WTC11 (cell line): ENCODE measurements at regions of chr7 and their contacts with region 1.

Region 1: DNA sequence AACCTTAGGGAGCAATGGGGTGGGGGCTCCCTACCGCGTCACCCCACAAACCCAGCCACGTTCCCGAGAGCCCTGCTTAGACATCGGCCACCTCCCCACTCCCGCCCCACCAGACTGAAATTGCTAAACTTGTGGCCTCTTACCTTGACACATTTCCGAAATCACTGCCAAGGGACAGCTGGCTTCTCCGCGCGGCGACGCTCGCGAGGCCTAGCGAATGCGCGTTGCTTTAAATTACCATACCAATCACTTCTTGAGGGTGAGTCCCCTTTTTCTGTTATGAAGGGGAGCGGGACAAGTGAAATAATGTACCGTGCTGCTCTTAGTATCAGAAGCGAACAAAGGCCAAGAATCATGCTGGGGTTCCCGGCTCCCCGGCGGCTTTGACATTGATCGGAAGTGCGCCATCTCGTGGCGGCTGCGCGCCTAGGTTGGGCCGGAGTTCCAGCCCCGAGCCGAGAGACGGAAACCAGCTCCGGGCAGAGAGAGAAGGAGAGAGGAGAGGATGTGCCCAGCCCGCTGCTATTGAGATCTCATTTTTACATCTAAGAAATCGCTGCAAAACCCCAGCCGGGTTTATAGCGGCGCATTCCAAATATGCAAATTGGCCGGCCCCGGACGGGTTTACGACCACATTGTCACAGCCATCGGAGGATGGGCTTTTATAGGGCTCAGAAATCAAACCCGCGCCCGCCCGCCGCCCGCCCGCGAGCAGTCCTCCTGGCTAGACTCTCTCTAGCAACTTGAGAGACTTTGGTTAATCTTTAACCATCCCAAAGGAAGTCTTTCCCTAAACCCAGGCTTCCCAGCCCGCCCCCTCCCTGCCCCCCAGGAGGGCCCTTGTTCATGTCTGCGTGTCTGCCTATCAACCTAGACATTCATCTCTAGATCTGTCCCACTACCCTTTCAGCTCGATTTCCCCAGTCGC is 5.3 kb downstream of the HOXA11 start:
- DNase-seq: peak; percentile 80
- ATAC-seq: peak; percentile 63
- H3K4me3 Mint-ChIP-seq: peak overlapping the region; percentile 41
- H3K27ac Mint-ChIP-seq: no peak overlapping the region
- H3K4me1 Mint-ChIP-seq: peaks cover 28% of the 10 kb centered on the region
- H3K27me3 Mint-ChIP-seq: peaks cover 100% of the 10 kb centered on the region
- CTCF ChIP-seq: peak; percentile 83

Region 2: GRCh38 chr7:27080844-27081436 is 98.8 kb before region 1 on chr7:
- CTCF ChIA-PET with region 1: no interaction called
- POLR2A ChIA-PET with region 1: no interaction called
- DNase-seq: no peak
- ATAC-seq: peak; percentile 69
- H3K4me3 Mint-ChIP-seq: no peak overlapping the region
- H3K27ac Mint-ChIP-seq: no peak overlapping the region
- H3K4me1 Mint-ChIP-seq: peaks cover 3% of the 10 kb centered on the region; the same call in 1 of the 2 replicates
- H3K27me3 Mint-ChIP-seq: peaks cover 46% of the 10 kb centered on the region
- CTCF ChIP-seq: no peak

Region 3: DNA sequence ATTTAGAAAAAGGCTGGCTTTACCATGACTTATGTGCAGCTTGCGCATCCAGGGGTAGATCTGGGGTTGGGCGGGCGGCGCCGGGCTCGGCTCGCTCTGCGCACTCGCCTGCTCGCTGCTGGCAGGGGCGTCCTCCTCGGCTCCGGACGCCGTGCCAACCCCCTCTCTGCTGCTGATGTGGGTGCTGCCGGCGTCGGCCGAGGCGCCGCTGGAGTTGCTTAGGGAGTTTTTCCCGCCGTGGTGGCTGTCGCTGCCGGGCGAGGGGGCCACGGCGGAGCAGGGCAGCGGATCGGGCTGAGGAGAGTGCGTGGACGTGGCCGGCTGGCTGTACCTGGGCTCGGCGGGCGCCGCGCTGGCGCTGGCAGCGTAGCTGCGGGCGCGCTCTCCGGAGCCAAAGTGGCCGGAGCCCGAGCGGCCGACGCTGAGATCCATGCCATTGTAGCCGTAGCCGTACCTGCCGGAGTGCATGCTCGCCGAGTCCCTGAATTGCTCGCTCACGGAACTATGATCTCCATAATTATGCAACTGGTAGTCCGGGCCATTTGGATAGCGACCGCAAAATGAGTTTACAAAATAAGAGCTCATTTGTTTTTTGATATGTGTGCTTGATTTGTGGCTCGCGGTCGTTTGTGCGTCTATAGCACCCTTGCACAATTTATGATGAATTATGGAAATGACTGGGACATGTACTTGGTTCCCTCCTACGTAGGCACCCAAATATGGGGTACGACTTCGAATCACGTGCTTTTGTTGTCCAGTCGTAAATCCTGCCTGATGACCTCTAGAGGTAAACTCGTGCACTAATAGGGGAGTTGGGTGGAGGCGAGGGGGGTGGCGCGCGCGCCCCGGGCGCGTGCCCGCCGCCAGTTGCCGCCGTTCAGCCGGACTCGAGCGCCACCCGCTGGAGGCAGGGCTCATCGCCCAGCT is 36.5 kb before region 1 on chr7 and contains the start of gene HOXA5:
- CTCF ChIA-PET with region 1: interaction called, 11 read pairs
- POLR2A ChIA-PET with region 1: no interaction called
- DNase-seq: peak; percentile 89
- ATAC-seq: peak; percentile 31
- H3K4me3 Mint-ChIP-seq: peak within 1 kb of the TSS; percentile 74
- H3K27ac Mint-ChIP-seq: no peak within 1 kb of the TSS
- H3K4me1 Mint-ChIP-seq: peaks cover 25% of the 10 kb centered on the region
- H3K27me3 Mint-ChIP-seq: peaks cover 100% of the 10 kb centered on the region
- CTCF ChIP-seq: peak; percentile 88
- total RNA-seq, gene HOXA5: 0.14 TPM in 1 of 3 replicates, not detected in the others

Region 4: GRCh38 chr7:27168265-27168947 is 11.4 kb before region 1 on chr7:
- CTCF ChIA-PET with region 1: interaction called, 22 read pairs
- POLR2A ChIA-PET with region 1: no interaction called
- DNase-seq: peak; percentile 35
- ATAC-seq: no peak
- H3K4me3 Mint-ChIP-seq: peak overlapping the region; percentile 13
- H3K27ac Mint-ChIP-seq: no peak overlapping the region
- H3K4me1 Mint-ChIP-seq: peaks cover 26% of the 10 kb centered on the region
- H3K27me3 Mint-ChIP-seq: peaks cover 99% of the 10 kb centered on the region
- CTCF ChIP-seq: no peak

Region 5: DNA sequence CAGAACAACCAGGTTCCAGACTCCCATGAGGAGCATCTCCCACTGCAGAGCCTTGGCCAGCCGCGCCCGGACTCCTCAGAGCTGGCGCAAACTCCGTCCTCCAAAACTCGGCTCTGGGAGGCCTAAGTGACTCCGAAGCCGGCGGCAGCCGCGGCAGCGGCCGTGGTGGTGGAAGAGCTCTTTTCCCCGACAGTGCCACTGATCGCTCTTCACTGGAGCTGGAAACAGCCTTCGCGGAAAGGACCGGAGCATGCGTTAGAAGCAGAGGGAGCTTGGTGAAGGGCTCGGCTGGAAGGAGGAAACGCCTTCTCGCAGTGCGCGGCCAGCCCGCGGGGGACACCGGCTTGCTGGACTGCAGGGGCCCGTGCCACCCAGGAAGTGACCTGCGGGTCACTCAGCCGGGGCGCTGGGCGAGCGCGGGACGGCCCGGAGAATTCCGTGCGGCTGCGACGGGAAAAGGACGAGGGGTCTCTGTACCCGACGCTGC is 25.1 kb after region 1 on chr7:
- CTCF ChIA-PET with region 1: interaction called, 20 read pairs
- POLR2A ChIA-PET with region 1: interaction called, 3 read pairs
- DNase-seq: no peak
- ATAC-seq: peak; percentile 4
- H3K4me3 Mint-ChIP-seq: peak overlapping the region; percentile 42
- H3K27ac Mint-ChIP-seq: no peak overlapping the region
- H3K4me1 Mint-ChIP-seq: peaks cover 31% of the 10 kb centered on the region
- H3K27me3 Mint-ChIP-seq: peaks cover 99% of the 10 kb centered on the region
- CTCF ChIP-seq: no peak

Region 6: DNA sequence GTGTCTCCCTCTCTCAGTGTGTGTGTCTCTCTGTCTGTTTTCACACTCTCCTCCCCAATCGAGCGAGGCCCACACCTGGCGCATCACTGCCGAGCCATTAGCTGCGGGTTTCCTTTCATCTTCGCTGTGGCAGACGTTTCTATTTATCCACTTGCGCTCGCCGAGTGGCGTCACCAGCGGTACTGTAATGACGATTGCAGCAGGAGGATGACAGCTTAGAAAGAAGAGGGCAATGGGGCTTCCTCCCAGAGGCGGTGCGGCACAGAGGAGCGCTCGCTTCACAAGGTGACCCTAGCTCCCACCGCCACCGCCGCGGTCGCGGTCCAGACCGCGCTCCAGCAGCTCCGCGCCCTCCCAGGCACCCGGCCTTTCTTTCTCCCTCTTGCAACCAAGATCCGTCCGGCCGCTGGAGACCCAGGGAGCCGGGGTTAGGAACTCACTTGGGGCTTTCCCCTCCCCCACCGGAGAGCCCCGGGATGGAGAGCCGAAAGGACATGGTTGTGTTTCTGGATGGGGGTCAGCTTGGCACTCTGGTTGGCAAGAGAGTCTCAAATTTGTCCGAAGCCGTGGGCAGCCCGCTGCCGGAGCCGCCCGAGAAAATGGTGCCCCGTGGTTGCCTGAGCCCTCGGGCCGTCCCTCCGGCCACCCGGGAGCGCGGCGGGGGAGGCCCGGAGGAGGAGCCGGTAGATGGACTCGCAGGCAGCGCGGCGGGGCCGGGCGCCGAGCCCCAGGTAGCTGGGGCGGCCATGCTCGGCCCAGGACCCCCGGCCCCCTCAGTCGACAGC is 63.0 kb after region 1 on chr7 and contains the start of gene EVX1:
- CTCF ChIA-PET with region 1: interaction called, 19 read pairs
- POLR2A ChIA-PET with region 1: no interaction called
- DNase-seq: no peak
- ATAC-seq: no peak
- H3K4me3 Mint-ChIP-seq: peak within 1 kb of the TSS; percentile 71
- H3K27ac Mint-ChIP-seq: no peak within 1 kb of the TSS
- H3K4me1 Mint-ChIP-seq: peaks cover 57% of the 10 kb centered on the region
- H3K27me3 Mint-ChIP-seq: peaks cover 100% of the 10 kb centered on the region
- CTCF ChIP-seq: no peak
- total RNA-seq, gene EVX1: not detected in 3 replicates

Region 7: GRCh38 chr7:27462575-27463270 is 283.0 kb after region 1 on chr7:
- CTCF ChIA-PET with region 1: no interaction called
- POLR2A ChIA-PET with region 1: no interaction called
- DNase-seq: no peak
- ATAC-seq: no peak
- H3K4me3 Mint-ChIP-seq: no peak overlapping the region
- H3K27ac Mint-ChIP-seq: no peak overlapping the region
- H3K4me1 Mint-ChIP-seq: peaks cover 8% of the 10 kb centered on the region
- H3K27me3 Mint-ChIP-seq: peaks cover 7% of the 10 kb centered on the region
- CTCF ChIP-seq: no peak